ENCODE measurements at regions of chr7 and their contacts with region 1.

Region 1: GRCh38 chr7:41003031-41003925 is 699.6 kb downstream of the INHBA start:
- DNase-seq: peak; percentile 11
- CTCF ChIP-seq: peak; percentile 83

Region 2: GRCh38 chr7:40964610-40965009 is 38.7 kb before region 1 on chr7:
- CTCF ChIA-PET with region 1: interaction called, 11 read pairs
- POLR2A ChIA-PET with region 1: no interaction called
- DNase-seq: no peak
- CTCF ChIP-seq: no peak

Region 3: DNA sequence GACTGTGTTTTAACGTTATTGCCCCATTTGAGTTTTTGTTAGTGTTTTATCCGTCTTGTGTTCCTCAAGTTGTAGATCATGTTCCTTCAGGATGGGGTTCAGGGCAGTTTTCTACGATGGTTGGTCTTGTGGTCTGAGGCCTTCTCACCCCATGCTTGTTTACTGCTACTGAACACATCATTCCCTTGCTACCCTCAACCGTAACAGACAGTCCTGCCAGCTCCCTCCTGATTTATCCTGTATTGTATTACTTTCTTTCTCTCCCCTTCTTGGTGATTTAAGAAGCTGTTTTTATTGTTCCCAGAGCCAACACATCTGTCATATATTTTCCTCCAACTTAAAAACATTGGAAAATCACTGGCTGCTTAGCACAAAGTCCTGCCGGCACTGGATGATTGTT is 20.2 kb before region 1 on chr7:
- CTCF ChIA-PET with region 1: interaction called, 13 read pairs
- POLR2A ChIA-PET with region 1: no interaction called
- DNase-seq: no peak
- CTCF ChIP-seq: no peak

Region 4: GRCh38 chr7:41020056-41020455 is 16.8 kb after region 1 on chr7:
- CTCF ChIA-PET with region 1: interaction called, 14 read pairs
- POLR2A ChIA-PET with region 1: no interaction called
- DNase-seq: no peak
- CTCF ChIP-seq: no peak

Region 5: DNA sequence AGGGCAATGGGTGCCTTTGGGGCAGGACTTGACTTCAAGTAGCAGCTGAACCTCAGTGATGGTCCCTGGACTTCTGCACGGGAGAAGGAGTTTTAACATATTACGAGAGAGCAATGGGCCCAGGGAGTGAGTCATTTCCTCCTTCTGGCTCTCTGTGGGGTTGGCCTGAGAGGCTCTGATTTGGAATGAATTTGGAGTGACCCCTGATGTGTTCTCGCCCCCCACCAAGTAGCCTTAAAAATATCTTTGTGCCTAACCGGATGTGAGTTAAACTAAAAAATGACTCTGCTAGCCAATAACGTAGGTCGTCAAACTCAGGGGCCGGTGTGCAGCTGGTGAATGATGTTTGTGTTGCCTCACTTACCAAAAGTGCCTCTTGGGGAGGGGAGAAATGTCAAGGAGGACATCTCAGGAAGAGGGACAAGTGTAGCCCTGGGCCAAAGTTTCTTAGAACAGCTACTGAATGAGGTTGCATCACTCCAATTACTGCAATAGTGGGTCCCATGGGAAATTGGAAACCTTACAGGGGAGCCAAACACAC is 43.0 kb after region 1 on chr7:
- CTCF ChIA-PET with region 1: interaction called, 12 read pairs
- POLR2A ChIA-PET with region 1: no interaction called
- DNase-seq: no peak
- CTCF ChIP-seq: no peak

Region 6: GRCh38 chr7:41705109-41705901 is 702.0 kb after region 1 on chr7:
- CTCF ChIA-PET with region 1: interaction called, 35 read pairs
- POLR2A ChIA-PET with region 1: no interaction called
- DNase-seq: peak; percentile 89
- CTCF ChIP-seq: peak; percentile 88